Testis (tissue), 5 donors: ENCODE measurements at regions of chr19 and their contacts with region 1.

Region 1: GRCh38 chr19:49097455-49098288 is 12.4 kb downstream of the SNRNP70 start:
- DNase-seq: peak; percentile 76
- H3K4me3 ChIP-seq: no peak overlapping the region
- H3K27ac ChIP-seq: no peak overlapping the region
- H3K4me1 ChIP-seq: peaks cover 18% of the 10 kb centered on the region
- H3K27me3 ChIP-seq: no peaks in the 10 kb centered on the region
- CTCF ChIP-seq: peak; percentile 93 to 99 (median 93)
- POLR2A ChIP-seq: no peak

Region 2: GRCh38 chr19:49148784-49149651 is 51.3 kb after region 1 on chr19:
- intact Hi-C with region 1: loop called (anchors 10 kb)
- DNase-seq: peak; percentile 100
- H3K4me3 ChIP-seq: peak overlapping the region; percentile 65 to 72
- H3K27ac ChIP-seq: peak overlapping the region; percentile 67 to 84
- H3K4me1 ChIP-seq: peaks cover 22% of the 10 kb centered on the region
- H3K27me3 ChIP-seq: no peaks in the 10 kb centered on the region
- CTCF ChIP-seq: no peak
- POLR2A ChIP-seq: peak; percentile 24

Region 3: DNA sequence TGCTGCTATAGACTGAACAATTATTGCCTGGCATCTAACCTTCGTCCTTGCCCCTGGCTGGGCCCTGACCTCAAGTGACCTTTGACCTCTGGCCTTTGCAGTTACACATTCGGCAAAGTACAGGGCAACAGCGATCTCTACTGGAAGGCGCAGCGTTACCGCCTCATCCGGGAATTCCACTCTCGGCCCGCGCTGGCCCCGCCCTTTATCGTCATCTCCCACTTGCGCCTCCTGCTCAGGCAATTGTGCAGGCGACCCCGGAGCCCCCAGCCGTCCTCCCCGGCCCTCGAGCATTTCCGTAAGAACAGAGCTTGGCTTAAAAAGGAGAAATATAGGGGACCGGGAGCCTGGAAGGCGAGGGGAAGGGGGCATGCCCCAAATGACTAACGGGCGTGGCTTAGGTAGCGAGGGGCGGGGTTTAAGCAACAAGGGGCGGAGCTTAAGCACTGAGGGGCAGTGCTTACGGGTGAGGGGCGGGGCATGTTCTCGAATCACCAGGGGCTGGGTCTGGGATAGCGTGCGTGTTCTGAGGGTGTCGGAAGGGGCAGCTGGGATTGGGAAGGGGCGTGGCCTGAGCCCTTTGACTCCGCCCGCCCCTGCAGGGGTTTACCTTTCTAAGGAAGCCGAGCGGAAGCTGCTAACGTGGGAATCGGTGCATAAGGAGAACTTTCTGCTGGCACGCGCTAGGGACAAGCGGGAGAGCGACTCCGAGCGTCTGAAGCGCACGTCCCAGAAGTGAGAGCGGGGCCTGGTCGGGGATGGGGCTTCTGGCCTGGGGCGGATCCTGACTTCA is 112.6 kb after region 1 on chr19:
- intact Hi-C with region 1: loop called (anchors 10 kb)
- DNase-seq: peak; percentile 85
- H3K4me3 ChIP-seq: peak overlapping the region; percentile 10 to 45
- H3K27ac ChIP-seq: no peak overlapping the region
- H3K4me1 ChIP-seq: peaks cover 4% of the 10 kb centered on the region
- H3K27me3 ChIP-seq: no peaks in the 10 kb centered on the region
- CTCF ChIP-seq: no peak
- POLR2A ChIP-seq: no peak